Tibial artery (tissue), 4 donors: ENCODE measurements at regions of chr6 and their contacts with region 1.

Region 1: DNA sequence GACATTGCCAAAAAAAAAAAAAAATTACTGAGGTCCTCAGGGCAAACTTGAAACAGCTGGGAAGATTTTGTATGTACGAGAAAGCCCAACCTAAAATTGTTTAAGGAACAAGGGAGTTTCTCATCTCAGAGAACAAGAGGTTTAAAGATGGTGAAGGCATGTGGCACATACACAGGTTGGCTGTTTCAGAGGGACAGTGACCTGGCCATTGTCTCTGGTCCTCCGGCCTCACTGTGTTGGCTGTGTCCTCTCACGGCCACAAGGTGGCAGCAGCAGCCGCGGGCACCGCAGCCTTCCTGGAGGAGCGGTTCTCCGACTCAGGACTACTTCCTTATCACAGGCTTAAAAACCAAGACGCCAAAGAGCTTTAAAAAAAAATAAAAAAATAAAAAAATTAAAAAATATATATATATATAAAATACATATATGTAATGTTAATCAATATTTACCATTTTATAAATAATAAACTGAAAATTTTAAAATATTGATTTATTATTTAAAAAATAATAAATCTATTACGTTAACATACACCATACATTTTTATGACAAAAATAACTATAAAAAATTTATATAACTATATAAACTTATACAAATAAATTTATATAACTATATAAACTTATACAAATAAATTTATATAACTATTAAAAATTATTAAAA is 52.8 kb downstream of the GTF2H5 start:
- DNase-seq: peak; percentile 73 to 84
- H3K4me3 ChIP-seq: no peak overlapping the region
- H3K27ac ChIP-seq: no peak overlapping the region
- H3K4me1 ChIP-seq: no peaks in the 10 kb centered on the region
- H3K27me3 ChIP-seq: no peaks in the 10 kb centered on the region
- CTCF ChIP-seq: peak; percentile 90 to 97

Region 2: DNA sequence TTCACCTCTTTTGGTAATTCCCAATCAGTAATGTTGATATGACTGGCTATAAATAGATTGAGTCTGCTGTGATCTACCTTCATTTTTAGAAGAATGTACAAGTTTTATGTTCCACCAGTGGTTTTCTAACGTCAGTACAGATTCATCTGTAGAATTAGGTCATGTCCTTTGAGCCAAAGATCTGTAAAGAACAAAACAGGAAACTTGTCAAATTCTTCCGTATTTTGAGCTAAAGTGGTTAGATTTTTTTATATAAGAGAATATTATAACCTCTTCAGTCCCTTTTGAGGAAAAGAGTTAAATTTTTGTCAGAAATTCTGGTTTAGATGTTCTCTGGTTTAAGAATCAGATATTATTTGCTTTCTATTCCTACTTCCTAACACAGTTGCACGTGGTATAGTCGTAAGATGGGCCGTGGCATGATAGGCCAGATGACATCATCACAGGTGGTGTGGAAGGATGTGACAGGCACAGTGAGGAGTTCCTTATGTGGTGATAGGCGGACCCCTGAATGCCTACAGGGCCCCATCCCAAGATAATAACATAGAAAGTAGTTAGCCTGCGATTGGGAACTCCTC is 335.6 kb before region 1 on chr6:
- intact Hi-C with region 1: no loop called
- DNase-seq: no peak
- H3K4me3 ChIP-seq: no peak overlapping the region
- H3K27ac ChIP-seq: no peak overlapping the region
- H3K4me1 ChIP-seq: no peaks in the 10 kb centered on the region
- H3K27me3 ChIP-seq: no peaks in the 10 kb centered on the region
- CTCF ChIP-seq: no peak

Region 3: GRCh38 chr6:158174514-158174913 is 46.4 kb before region 1 on chr6:
- intact Hi-C with region 1: no loop called
- DNase-seq: peak in 1 of 2 donors; percentile 34
- H3K4me3 ChIP-seq: no peak overlapping the region
- H3K27ac ChIP-seq: peak overlapping the region; percentile 33 to 54
- H3K4me1 ChIP-seq: peaks cover 0 to 55% (median 34%) of the 10 kb centered on the region in 4 donors
- H3K27me3 ChIP-seq: no peaks in the 10 kb centered on the region
- CTCF ChIP-seq: no peak

Region 4: GRCh38 chr6:158286413-158286812 is 65.5 kb after region 1 on chr6:
- intact Hi-C with region 1: loop called (anchors 5 kb)
- DNase-seq: no peak
- H3K4me3 ChIP-seq: no peak overlapping the region
- H3K27ac ChIP-seq: no peak overlapping the region
- H3K4me1 ChIP-seq: peaks cover 0 to 33% (median 19%) of the 10 kb centered on the region in 4 donors
- H3K27me3 ChIP-seq: no peaks in the 10 kb centered on the region
- CTCF ChIP-seq: no peak

Region 5: DNA sequence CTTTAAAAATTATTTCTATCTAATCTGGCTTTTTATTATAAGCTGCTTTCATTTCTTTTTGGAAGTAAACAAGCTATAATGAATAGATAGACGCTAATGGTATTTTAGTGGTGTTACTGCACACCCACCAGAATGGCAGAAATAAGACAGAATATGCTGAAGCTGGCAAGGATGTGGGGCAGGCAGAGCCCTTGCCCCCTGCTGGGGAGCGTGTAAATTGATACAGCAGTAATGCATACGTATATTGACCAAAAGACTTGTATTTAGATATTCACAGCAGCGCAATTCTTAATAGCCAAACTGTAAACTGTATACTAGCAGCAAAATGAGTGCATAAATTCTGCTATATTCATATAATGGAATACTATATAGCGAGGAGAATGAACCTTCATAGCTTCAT is 374.3 kb after region 1 on chr6:
- intact Hi-C with region 1: loop called (anchors 5 kb)
- DNase-seq: no peak
- H3K4me3 ChIP-seq: no peak overlapping the region
- H3K27ac ChIP-seq: no peak overlapping the region
- H3K4me1 ChIP-seq: no peaks in the 10 kb centered on the region
- H3K27me3 ChIP-seq: no peaks in the 10 kb centered on the region
- CTCF ChIP-seq: peak in 1 of 2 experiments; percentile 6

Region 6: DNA sequence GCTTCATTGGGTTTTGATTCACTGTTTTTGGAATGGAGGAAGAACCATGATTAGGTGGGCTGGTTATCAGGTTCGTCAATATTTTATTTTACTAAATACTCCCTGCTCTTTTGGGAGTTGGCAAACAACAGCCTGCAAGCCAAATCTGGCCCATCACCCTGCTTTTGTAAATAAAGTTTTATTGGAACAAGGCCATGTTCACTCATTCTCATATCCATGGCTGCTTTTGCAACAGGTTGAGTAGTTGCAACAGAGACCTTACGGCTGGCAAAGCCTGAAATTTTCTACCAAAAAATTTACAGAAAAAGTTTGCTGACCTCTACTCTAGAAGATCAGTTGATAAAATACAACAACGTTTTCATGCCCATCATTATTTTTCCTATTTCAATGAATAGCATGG is 474.0 kb after region 1 on chr6:
- intact Hi-C with region 1: loop called (anchors 5 kb)
- DNase-seq: no peak
- H3K4me3 ChIP-seq: no peak overlapping the region
- H3K27ac ChIP-seq: no peak overlapping the region
- H3K4me1 ChIP-seq: no peaks in the 10 kb centered on the region
- H3K27me3 ChIP-seq: no peaks in the 10 kb centered on the region
- CTCF ChIP-seq: no peak